ENCODE measurements at regions of chr15 and their contacts with region 1.

Region 1: GRCh38 chr15:52780172-52780980 is 9.8 kb downstream of the ONECUT1 start:
- DNase-seq: peak; percentile 57
- H3K4me3 ChIP-seq: no peak overlapping the region
- H3K27ac ChIP-seq: no peak overlapping the region
- H3K4me1 ChIP-seq: peaks cover 5% of the 10 kb centered on the region
- H3K27me3 ChIP-seq: peaks cover 45 to 77% of the 10 kb centered on the region in 2 experiments
- CTCF ChIP-seq: peak; percentile 76 to 96
- POLR2A ChIP-seq: no peak

Region 2: DNA sequence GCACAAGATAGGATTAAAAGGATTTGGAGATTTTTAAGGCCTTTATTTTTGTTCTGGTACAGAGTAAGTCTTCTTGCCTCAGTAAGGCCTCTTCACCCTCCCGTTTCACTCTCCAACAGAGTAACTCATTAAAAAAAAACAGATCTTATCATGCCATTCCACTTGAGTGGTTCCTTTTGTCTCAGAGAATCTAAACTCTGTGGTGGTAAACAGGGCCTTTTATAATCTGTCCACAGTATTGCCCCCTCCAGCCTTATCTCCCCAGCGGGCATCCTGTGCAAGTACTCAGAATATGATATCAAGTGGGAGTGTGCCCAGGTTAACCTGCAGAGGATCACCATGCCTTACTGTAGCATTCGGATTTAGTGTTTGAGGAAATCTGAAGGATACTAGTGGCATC is 80.9 kb before region 1 on chr15:
- CTCF ChIA-PET with region 1: no interaction called
- POLR2A ChIA-PET with region 1: no interaction called
- dilution Hi-C with region 1: no loop called
- intact Hi-C with region 1: no loop called
- DNase-seq: no peak
- H3K4me3 ChIP-seq: no peak overlapping the region
- H3K27ac ChIP-seq: no peak overlapping the region
- H3K4me1 ChIP-seq: no peaks in the 10 kb centered on the region
- H3K27me3 ChIP-seq: peaks cover 2 to 6% of the 10 kb centered on the region in 2 experiments
- CTCF ChIP-seq: no peak
- POLR2A ChIP-seq: no peak

Region 3: GRCh38 chr15:53197426-53197839 is 417.1 kb after region 1 on chr15:
- CTCF ChIA-PET with region 1: no interaction called
- POLR2A ChIA-PET with region 1: no interaction called
- dilution Hi-C with region 1: no loop called
- intact Hi-C with region 1: loop called (anchors 1 kb)
- DNase-seq: peak; percentile 35
- H3K4me3 ChIP-seq: no peak overlapping the region
- H3K27ac ChIP-seq: no peak overlapping the region
- H3K4me1 ChIP-seq: no peaks in the 10 kb centered on the region
- H3K27me3 ChIP-seq: no peaks in the 10 kb centered on the region
- CTCF ChIP-seq: peak; percentile 80 to 94
- POLR2A ChIP-seq: no peak

Region 4: DNA sequence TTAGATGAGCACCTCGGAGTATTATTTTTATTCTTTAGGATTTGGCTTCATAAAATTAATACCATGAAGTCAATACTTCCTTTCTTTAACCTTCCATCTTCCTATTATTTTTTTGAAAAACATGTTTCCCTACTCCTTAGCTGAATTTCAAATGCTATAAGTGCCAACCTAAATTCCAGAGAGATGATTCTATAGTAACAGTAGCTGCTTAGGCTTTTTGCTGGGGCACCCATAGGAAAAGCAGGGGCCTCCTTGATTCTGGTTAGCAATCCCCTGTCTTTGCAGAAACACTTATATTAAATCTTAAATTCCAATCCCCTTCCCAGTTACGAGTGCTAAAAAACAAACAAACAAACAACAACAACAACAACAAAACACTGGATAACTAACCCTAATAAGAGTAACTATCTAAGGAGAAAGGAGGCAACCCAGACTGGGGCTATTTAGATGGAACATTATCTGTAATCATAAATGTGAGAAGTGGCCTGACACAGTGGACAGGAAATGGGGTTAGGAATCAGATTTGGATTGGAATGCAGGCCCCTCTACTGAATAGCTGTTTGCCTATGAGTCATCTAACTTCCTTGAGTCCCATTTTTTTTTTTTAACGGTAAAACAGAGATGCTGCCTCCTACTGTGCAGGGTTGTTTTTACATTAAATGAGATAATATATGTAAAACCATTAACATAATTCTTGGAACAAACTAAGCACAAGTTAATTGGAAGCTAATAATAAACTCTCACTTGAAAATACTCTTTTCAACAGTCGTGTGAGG is 831.0 kb after region 1 on chr15:
- CTCF ChIA-PET with region 1: no interaction called
- POLR2A ChIA-PET with region 1: no interaction called
- dilution Hi-C with region 1: no loop called
- intact Hi-C with region 1: loop called (anchors 5 kb)
- DNase-seq: peak; percentile 97
- H3K4me3 ChIP-seq: no peak overlapping the region
- H3K27ac ChIP-seq: peak overlapping the region; percentile 85
- H3K4me1 ChIP-seq: peaks cover 18% of the 10 kb centered on the region
- H3K27me3 ChIP-seq: no peaks in the 10 kb centered on the region
- CTCF ChIP-seq: peak; percentile 16
- POLR2A ChIP-seq: peak; percentile 49

Region 5: GRCh38 chr15:53716909-53717876 is 936.8 kb after region 1 on chr15:
- CTCF ChIA-PET with region 1: interaction called, 9 read pairs
- POLR2A ChIA-PET with region 1: no interaction called
- dilution Hi-C with region 1: no loop called
- intact Hi-C with region 1: loop called (anchors 1 kb)
- DNase-seq: peak; percentile 21
- H3K4me3 ChIP-seq: no peak overlapping the region
- H3K27ac ChIP-seq: no peak overlapping the region
- H3K4me1 ChIP-seq: no peaks in the 10 kb centered on the region
- H3K27me3 ChIP-seq: no peaks in the 10 kb centered on the region
- CTCF ChIP-seq: peak; percentile 8 to 17
- POLR2A ChIP-seq: no peak

Measured in endothelial cell of umbilical vein (primary cell).